ENCODE measurements at regions of chr7 and their contacts with region 1.

Region 1: DNA sequence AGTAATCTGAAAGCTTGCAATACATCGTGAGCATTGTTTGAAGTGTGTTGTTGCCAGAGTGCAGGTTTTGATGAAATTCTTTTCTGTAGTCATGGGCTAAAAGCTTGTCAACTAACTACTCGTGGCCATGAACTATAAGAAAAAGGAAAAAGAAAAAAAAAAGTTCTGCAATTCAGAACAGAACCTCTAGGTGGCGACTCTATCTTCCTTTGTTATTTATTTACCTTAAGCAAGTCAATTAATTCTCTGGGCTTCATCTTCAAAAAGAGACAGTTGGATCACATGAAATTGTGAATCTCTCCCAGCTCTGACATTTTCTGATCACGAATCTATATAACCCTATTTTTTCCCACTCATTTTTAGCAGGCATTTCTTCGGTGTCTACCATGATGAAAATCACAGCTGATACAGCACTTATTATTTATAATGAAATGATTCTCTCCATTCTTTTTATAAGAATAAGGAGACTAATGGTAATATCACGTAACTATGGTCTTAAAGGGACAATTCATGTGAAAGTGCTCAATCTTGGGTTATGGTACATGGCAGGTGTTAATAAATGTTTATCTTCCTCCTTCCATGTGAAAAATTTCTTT is 18.8 kb downstream of the TMEM196 start:
- DNase-seq: peak; percentile 60
- H3K4me3 ChIP-seq: no peak overlapping the region
- H3K27ac ChIP-seq: no peak overlapping the region
- H3K4me1 ChIP-seq: no peaks in the 10 kb centered on the region
- H3K27me3 ChIP-seq: peaks cover 42% of the 10 kb centered on the region
- CTCF ChIP-seq: peak; percentile 84

Region 2: GRCh38 chr7:19939746-19940145 is 185.1 kb after region 1 on chr7:
- CTCF ChIA-PET with region 1: no interaction called
- POLR2A ChIA-PET with region 1: no interaction called
- intact Hi-C with region 1: no loop called
- DNase-seq: no peak
- H3K4me3 ChIP-seq: no peak overlapping the region
- H3K27ac ChIP-seq: no peak overlapping the region
- H3K4me1 ChIP-seq: no peaks in the 10 kb centered on the region
- H3K27me3 ChIP-seq: no peaks in the 10 kb centered on the region
- CTCF ChIP-seq: no peak

Region 3: DNA sequence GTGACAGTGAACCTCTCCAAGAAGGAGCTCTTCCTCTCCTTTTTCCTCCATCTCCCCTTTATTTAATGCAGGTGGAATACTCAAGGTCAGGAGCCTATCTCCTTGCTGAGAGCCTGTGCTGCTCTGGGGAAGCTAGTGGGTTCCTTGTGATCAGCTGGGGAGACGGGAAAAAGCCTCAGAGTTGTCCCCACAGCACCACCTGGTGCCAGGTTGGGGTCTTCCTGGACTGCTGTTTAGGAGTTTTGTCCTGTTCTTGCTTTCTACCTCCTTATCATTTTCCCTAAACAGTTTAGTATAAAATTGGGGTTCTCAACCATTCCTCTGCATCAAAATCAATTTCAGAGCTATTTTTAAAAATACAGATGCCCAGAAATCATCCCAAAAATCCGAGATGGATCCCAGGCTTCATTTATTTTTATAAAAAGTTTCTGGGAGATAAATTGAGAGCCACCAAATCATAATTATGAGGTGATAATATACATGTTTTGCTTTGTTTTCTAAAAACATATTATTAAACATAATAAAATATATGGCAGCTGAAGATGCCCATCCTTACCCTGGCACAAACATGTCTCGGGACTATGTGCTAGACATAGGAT is 418.2 kb after region 1 on chr7:
- CTCF ChIA-PET with region 1: no interaction called
- POLR2A ChIA-PET with region 1: no interaction called
- intact Hi-C with region 1: loop called (anchors 5 kb)
- DNase-seq: peak; percentile 58
- H3K4me3 ChIP-seq: no peak overlapping the region
- H3K27ac ChIP-seq: no peak overlapping the region
- H3K4me1 ChIP-seq: no peaks in the 10 kb centered on the region
- H3K27me3 ChIP-seq: peaks cover 18% of the 10 kb centered on the region
- CTCF ChIP-seq: peak; percentile 64

Region 4: DNA sequence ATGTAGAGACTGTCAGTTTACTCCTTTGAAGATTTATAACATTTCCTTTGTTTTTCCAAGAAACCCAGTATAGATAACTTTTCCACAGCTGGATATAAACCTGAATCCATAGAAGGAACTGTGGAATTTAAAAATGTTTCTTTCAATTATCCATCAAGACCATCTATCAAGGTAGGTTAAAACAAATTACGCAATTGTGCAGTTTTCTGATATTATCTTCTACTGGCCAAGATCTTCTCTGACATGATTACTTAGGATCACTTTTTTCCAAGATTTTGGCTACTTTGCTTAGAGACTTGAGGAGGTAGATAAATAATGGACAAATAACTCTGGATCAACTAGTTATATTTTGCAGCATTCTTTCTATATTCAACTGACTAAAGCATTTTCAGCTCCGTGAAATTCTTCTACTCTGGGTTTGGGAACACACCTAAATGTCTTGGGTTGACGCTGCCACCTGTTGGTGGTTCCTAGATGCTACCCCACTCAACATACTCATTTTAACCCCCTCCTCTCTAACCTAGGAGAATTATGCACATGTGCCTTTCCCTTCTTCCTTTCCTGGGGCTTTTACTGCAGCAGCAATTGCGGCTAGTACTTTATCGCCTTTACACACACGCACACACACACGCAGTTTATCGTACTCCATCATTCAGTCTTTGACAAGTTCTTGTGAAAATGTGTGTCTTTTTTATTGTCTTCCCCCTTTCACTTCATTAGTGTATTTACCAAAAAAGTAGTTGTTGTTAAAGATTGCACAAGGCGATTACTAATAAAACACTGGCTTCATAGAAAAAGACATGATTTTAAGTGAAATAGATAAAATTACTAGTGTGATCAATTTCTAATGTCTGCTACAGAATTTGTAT is 893.5 kb after region 1 on chr7:
- CTCF ChIA-PET with region 1: no interaction called
- POLR2A ChIA-PET with region 1: no interaction called
- intact Hi-C with region 1: loop called (anchors 5 kb)
- DNase-seq: peak; percentile 38
- H3K4me3 ChIP-seq: no peak overlapping the region
- H3K27ac ChIP-seq: no peak overlapping the region
- H3K4me1 ChIP-seq: no peaks in the 10 kb centered on the region
- H3K27me3 ChIP-seq: peaks cover 72% of the 10 kb centered on the region
- CTCF ChIP-seq: peak; percentile 52